ENCODE measurements at regions of chr1 and their contacts with region 1.

Region 1: DNA sequence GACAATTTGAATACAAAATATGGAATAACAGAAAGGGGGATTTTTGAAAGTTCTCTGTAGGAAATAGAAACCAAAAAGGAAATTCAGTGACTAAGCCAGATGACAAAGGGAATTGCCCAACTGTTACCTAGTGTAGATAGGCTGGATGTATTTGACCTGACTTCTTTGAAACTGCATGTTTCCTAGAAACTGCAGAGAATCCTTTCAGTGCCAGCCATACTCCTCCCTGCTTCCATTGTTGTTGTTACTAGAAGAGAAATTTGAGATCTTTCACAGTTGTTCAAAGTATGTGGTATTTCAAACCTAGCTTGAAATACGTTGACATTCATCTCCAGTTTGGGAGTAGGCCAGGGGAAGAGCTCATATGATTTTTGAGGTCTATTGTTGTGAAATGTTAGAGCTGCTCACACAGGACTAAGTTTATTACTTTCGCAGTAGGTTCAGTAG is 1.8 kb upstream of the GBP5 start:
- DNase-seq: no peak
- ATAC-seq: no peak
- H3K4me3 ChIP-seq: peak overlapping the region in 1 of 5 experiments; percentile 18
- H3K4me3 Mint-ChIP-seq: peak overlapping the region; percentile 75
- H3K27ac ChIP-seq: no peak overlapping the region
- H3K27ac Mint-ChIP-seq: peak overlapping the region; percentile 70
- H3K4me1 ChIP-seq: peaks cover 30 to 37% of the 10 kb centered on the region in 2 donors
- H3K4me1 Mint-ChIP-seq: peaks cover 53% of the 10 kb centered on the region
- H3K27me3 ChIP-seq: no peaks in the 10 kb centered on the region
- H3K27me3 Mint-ChIP-seq: no peaks in the 10 kb centered on the region
- CTCF ChIP-seq: no peak

Region 2: DNA sequence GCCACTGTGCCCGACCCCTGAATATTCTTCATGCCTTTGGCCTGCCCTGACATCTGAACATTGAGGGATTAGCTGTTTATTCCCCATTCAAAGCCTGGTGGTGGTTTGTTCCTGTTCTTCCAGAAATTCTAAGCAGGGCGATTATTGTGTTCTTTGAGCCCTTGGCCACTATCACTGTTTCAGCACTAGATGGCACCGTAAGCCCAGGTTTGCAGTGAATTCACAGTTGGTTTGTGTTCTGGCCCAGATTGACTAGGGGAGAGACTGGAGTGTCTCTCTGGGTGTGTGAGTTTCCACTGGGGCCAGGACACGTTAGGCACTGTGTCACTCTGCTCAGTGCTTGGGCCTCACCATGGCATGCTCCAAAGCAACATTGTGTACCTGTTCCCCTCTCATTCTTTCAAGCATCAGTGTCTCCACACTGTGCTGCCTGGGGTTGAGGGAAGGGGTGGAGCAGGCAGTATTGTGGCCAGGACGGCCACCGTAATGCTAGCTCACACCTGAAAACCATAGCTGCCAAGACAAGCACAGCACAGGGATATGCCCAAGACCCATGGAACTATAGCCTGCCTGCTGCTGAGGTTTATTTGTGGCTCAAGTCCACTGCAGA is 537.7 kb before region 1 on chr1:
- CTCF ChIA-PET with region 1: no interaction called
- POLR2A ChIA-PET with region 1: no interaction called
- intact Hi-C with region 1: no loop called
- DNase-seq: peak; percentile 8
- ATAC-seq: no peak
- H3K4me3 ChIP-seq: no peak overlapping the region
- H3K4me3 Mint-ChIP-seq: no peak overlapping the region
- H3K27ac ChIP-seq: no peak overlapping the region
- H3K27ac Mint-ChIP-seq: no peak overlapping the region
- H3K4me1 ChIP-seq: no peaks in the 10 kb centered on the region
- H3K4me1 Mint-ChIP-seq: peaks cover 6% of the 10 kb centered on the region
- H3K27me3 ChIP-seq: no peaks in the 10 kb centered on the region
- H3K27me3 Mint-ChIP-seq: no peaks in the 10 kb centered on the region
- CTCF ChIP-seq: no peak

Region 3: GRCh38 chr1:89261926-89262515 is 12.4 kb before region 1 on chr1:
- CTCF ChIA-PET with region 1: no interaction called
- POLR2A ChIA-PET with region 1: no interaction called
- intact Hi-C with region 1: no loop called
- DNase-seq: no peak
- ATAC-seq: no peak
- H3K4me3 ChIP-seq: no peak overlapping the region
- H3K4me3 Mint-ChIP-seq: no peak overlapping the region
- H3K27ac ChIP-seq: no peak overlapping the region
- H3K27ac Mint-ChIP-seq: no peak overlapping the region
- H3K4me1 ChIP-seq: peaks cover 0 to 7% of the 10 kb centered on the region in 2 donors
- H3K4me1 Mint-ChIP-seq: peaks cover 9% of the 10 kb centered on the region
- H3K27me3 ChIP-seq: no peaks in the 10 kb centered on the region
- H3K27me3 Mint-ChIP-seq: no peaks in the 10 kb centered on the region
- CTCF ChIP-seq: no peak

Region 4: DNA sequence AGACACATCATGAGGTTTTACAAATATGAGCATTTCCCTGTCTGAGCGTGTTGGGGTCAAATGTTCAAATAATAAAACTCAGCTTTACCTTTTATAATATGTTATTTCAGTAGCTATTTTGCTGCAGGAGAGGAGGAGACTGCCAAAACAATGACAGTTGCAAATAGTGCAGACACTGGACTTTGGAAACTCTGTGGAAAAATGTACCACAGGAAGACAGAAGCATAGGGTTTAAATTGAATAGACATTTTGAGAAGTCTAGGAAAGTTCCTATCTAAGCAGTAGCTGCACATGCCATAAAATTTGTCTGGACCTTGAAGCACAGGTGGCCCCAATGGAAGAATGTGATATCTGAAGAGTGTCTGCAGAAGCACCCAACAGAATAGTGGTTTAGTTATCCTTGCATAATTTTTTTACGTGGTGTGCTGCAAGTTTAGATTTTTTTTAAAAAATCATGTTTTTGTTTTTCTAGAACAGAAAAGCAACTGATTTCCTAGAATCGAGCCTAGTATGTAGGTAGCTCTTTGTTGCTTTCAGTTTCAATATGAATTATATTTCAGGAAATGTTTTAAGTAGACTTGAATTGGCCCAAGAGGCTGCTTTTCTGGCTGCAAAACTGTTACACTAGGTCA is 12.2 kb after region 1 on chr1:
- CTCF ChIA-PET with region 1: no interaction called
- POLR2A ChIA-PET with region 1: no interaction called
- intact Hi-C with region 1: loop called (anchors 1 kb)
- DNase-seq: peak; percentile 54
- ATAC-seq: peak; percentile 74
- H3K4me3 ChIP-seq: peak overlapping the region in 4 of 5 experiments; percentile 1 to 61 (median 36)
- H3K4me3 Mint-ChIP-seq: peak overlapping the region; percentile 79
- H3K27ac ChIP-seq: peak overlapping the region; percentile 50 to 53
- H3K27ac Mint-ChIP-seq: peak overlapping the region; percentile 81
- H3K4me1 ChIP-seq: peaks cover 14% of the 10 kb centered on the region in 2 donors
- H3K4me1 Mint-ChIP-seq: peaks cover 21% of the 10 kb centered on the region
- H3K27me3 ChIP-seq: no peaks in the 10 kb centered on the region
- H3K27me3 Mint-ChIP-seq: no peaks in the 10 kb centered on the region
- CTCF ChIP-seq: no peak

Measured in B cell (primary cell).